A549 (cell line): ENCODE measurements at regions of chr19 and their contacts with region 1.

Region 1: GRCh38 chr19:58519355-58520256 is at the start of gene ZBTB45:
- DNase-seq: peak; percentile 90 to 99
- ATAC-seq: peak; percentile 85 to 88
- H3K4me3 ChIP-seq: peak within 1 kb of the TSS; percentile 65
- H3K27ac ChIP-seq: peak within 1 kb of the TSS; percentile 86 to 92
- H3K4me1 ChIP-seq: peaks cover 16% of the 10 kb centered on the region
- CTCF ChIP-seq: peak; percentile 77
- EP300 ChIP-seq: peak in 1 of 2 experiments; percentile 41; a peak in 1 of 5 replicates
- POLR2A ChIP-seq: peak; percentile 84
- RAD21 ChIP-seq: peak; percentile 83 to 92
- polyA plus RNA-seq, gene ZBTB45: 6.2 and 6.4 TPM in 2 replicates

Region 2: GRCh38 chr19:58296104-58296503 is 223.5 kb before region 1 on chr19:
- CTCF ChIA-PET with region 1: no interaction called
- POLR2A ChIA-PET with region 1: no interaction called
- DNase-seq: no peak
- ATAC-seq: no peak
- H3K4me3 ChIP-seq: no peak overlapping the region
- H3K27ac ChIP-seq: no peak overlapping the region
- H3K4me1 ChIP-seq: no peaks in the 10 kb centered on the region
- CTCF ChIP-seq: no peak
- EP300 ChIP-seq: no peak
- POLR2A ChIP-seq: no peak
- RAD21 ChIP-seq: no peak

Region 3: GRCh38 chr19:58362272-58362994 is 157.2 kb before region 1 on chr19 and contains the start of gene ZNF497:
- CTCF ChIA-PET with region 1: interaction called, 10 read pairs
- POLR2A ChIA-PET with region 1: interaction called, 26 read pairs
- DNase-seq: peak; percentile 99 to 100
- ATAC-seq: peak; percentile 89 to 95
- H3K4me3 ChIP-seq: peak within 1 kb of the TSS; percentile 58
- H3K27ac ChIP-seq: peak within 1 kb of the TSS; percentile 82 to 88
- H3K4me1 ChIP-seq: peaks cover 7% of the 10 kb centered on the region; the same call in 1 of the 3 replicates
- CTCF ChIP-seq: no peak
- EP300 ChIP-seq: no peak
- POLR2A ChIP-seq: peak; percentile 63
- RAD21 ChIP-seq: no peak
- polyA plus RNA-seq, gene ZNF497: 1.1 and 1.4 TPM in 2 replicates

Region 4: DNA sequence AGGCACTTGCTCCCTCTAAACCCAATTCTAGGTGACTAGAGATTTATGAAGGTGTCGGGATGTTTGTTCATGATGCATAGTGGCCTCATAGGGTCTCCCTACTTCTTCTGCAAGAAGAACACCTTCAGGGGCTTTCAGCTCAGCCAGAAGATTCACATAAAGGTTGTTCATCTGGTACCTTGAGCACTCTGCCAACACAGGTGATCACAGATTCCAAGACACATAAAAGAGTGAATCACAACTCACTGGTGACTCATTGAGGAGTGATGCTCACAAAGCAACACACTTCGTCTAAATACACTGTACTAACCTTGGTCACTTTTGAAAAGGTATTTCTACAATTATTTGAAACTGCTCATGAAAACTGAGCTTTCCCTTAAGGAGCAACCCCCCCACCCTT is 59.6 kb before region 1 on chr19:
- CTCF ChIA-PET with region 1: interaction called, 14 read pairs
- POLR2A ChIA-PET with region 1: no interaction called
- DNase-seq: no peak
- ATAC-seq: no peak
- H3K4me3 ChIP-seq: no peak overlapping the region
- H3K27ac ChIP-seq: no peak overlapping the region
- H3K4me1 ChIP-seq: no peaks in the 10 kb centered on the region
- CTCF ChIP-seq: no peak
- EP300 ChIP-seq: no peak
- POLR2A ChIP-seq: no peak
- RAD21 ChIP-seq: no peak

Region 5: DNA sequence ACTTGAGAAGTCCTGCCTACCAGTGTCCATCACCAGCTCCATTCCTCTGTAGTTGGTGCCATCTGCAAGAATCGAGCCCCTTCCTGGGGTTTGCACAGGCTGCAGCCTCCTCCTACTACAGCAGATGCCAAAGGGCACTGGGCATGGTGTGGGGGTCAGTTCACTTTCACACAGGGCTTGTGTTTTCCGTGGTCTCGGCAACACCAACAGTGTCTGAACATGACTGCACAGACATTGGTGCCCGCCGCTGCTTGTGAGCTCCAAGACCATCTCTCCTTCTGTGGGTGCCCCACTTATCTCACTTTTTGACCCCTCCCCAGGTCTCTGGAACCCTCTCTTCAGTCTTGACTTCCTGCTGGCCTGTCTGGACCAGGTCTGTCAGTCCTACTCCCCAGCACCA is 28.2 kb before region 1 on chr19:
- CTCF ChIA-PET with region 1: interaction called, 15 read pairs
- POLR2A ChIA-PET with region 1: interaction called, 5 read pairs
- DNase-seq: no peak
- ATAC-seq: peak in 1 of 2 experiments; percentile 52; a peak in 2 of 6 replicates
- H3K4me3 ChIP-seq: no peak overlapping the region
- H3K27ac ChIP-seq: no peak overlapping the region
- H3K4me1 ChIP-seq: no peaks in the 10 kb centered on the region
- CTCF ChIP-seq: no peak
- EP300 ChIP-seq: no peak
- POLR2A ChIP-seq: no peak
- RAD21 ChIP-seq: no peak

Region 6: DNA sequence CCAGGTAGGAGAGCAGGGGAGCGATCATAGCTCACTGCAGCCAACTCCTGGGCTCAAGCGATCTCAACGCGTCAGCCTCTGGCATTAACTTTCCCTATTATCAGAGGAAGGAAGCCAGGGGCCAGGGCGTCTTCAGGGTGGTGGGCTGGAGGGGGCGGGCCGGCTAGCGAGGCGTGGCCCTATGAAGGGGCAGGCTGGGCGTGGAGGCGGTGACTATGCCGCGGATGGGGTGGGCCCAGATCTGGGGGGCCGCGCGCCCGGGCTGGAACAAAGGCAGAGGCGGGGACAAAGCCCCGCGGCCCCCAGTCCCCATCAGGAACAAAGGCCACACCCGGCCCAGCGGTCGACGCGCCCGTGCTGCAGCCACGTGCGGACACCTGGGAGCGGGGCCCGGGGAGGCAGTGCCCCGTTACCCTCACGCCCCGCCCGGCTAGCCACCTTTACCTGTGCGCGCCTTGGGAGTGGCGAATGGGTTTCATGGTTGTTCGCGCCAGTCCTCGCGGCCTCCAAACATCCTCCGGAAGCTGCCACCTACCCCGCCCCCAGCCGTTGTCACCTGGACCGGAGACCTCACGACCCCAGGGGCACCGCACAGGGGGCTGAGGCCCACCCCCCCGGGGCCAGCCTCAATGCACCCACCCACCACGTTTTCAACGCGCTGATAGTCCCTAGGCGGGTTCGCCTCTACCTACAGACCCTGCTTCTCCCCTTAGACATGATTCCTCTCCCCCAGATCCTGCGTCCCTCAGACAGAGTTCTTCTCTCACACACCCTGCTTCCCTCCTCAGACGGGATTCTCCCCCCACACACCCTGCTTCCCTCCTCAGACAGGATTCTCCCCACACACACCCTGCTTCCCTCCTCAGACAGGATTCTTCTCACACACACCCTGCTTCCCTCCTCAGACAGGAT is 18.9 kb after region 1 on chr19:
- CTCF ChIA-PET with region 1: interaction called, 222 read pairs
- POLR2A ChIA-PET with region 1: interaction called, 184 read pairs
- DNase-seq: no peak
- ATAC-seq: peak; percentile 35 to 39; a peak in 4 of 6 replicates
- H3K4me3 ChIP-seq: no peak overlapping the region
- H3K27ac ChIP-seq: no peak overlapping the region
- H3K4me1 ChIP-seq: peaks cover 4% of the 10 kb centered on the region; the same call in 2 of the 3 replicates
- CTCF ChIP-seq: no peak
- EP300 ChIP-seq: no peak
- POLR2A ChIP-seq: no peak
- RAD21 ChIP-seq: no peak

Region 7: GRCh38 chr19:58572818-58573657 is 53.4 kb after region 1 on chr19 and contains the start of gene MZF1:
- CTCF ChIA-PET with region 1: interaction called, 39 read pairs
- POLR2A ChIA-PET with region 1: interaction called, 24 read pairs
- DNase-seq: peak; percentile 100
- ATAC-seq: peak; percentile 64 to 81
- H3K4me3 ChIP-seq: peak within 1 kb of the TSS; percentile 67
- H3K27ac ChIP-seq: peak within 1 kb of the TSS; percentile 91
- H3K4me1 ChIP-seq: peaks cover 15% of the 10 kb centered on the region
- CTCF ChIP-seq: no peak
- EP300 ChIP-seq: no peak
- POLR2A ChIP-seq: peak; percentile 57
- RAD21 ChIP-seq: no peak
- polyA plus RNA-seq, gene MZF1: 19.5 and 20.3 TPM in 2 replicates